HEK293 (cell line): ENCODE measurements at regions of chr10 and their contacts with region 1.

Region 1: DNA sequence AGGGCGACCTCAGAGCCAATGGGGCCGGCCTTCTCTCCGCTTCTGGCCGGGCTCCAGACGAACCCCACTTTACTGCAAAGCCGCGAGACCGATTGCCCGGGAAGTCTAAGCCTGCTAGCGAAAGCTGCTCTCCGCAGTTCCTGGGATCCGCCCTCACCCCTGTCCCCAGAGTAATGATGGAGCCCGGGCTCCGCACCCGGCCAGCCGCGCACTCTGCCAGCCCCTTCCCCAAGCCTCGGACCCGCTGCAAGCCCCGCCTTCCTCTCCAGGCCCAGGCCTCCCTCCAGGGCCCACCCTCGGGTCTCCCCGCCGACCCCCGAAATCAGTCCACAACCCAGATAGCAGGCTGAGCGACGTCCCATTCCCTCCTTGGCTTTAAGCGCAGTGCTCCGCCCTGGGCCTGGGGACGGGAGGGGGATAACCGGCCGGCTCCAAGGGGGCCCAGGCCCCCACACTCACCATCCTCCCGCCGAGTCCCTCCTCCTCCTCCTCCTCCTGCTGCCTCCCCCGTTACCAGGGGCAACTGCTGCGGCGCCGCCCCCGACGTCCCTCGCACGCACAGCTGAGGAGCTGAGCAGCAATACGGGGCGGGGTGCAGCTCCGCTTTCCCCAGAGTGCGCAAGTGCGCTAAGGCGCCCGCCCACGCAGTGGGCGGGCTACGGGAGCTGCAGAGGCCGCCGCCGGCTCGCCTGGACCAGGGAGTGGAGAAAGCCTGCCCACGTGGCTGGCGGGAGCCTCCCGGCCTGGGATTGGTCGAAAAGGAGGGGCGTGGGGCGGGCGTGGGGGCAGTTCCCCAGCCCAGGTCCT is at the start of gene ARL3:
- H3K4me3 ChIP-seq: peak within 1 kb of the TSS; percentile 65
- H3K27ac ChIP-seq: peak within 1 kb of the TSS; percentile 83
- H3K4me1 ChIP-seq: peaks cover 24% of the 10 kb centered on the region
- CTCF ChIP-seq: peak; percentile 73; the same call in 1 of the 2 replicates

Region 2: GRCh38 chr10:102633292-102633691 is 80.7 kb before region 1 on chr10:
- CTCF ChIA-PET with region 1: no interaction called
- POLR2A ChIA-PET with region 1: no interaction called
- H3K4me3 ChIP-seq: no peak overlapping the region
- H3K27ac ChIP-seq: no peak overlapping the region
- H3K4me1 ChIP-seq: peaks cover under 1% of the 10 kb centered on the region; the same call in 1 of the 2 replicates
- CTCF ChIP-seq: no peak

Region 3: GRCh38 chr10:102669206-102670064 is 44.6 kb before region 1 on chr10:
- CTCF ChIA-PET with region 1: interaction called, 11 read pairs
- POLR2A ChIA-PET with region 1: interaction called, 5 read pairs
- H3K4me3 ChIP-seq: no peak overlapping the region
- H3K27ac ChIP-seq: no peak overlapping the region
- H3K4me1 ChIP-seq: peaks cover 3% of the 10 kb centered on the region; the same call in 1 of the 2 replicates
- CTCF ChIP-seq: peak; percentile 47

Region 4: DNA sequence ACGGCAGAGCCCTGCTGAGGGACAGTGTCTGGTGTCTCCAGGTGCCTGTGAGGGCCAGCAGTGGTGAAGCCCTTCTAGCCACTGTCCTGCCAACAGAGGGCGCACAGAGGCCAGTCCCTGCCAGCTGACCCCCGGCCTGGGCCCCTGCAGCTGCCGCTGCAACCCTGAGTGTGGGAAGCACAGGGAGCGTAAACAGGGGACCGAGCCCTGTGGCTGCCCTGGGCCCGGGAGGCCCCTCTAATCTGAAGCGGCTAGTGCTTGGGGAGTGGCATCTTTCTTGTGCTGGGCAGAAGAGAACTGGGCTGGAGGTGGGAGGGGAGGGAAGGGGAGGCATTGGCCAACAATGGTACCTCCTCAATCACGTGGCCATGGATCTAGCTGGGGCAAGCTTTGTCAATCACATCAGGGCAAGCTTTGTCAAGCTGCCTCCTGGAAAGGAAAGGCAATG is 35.2 kb before region 1 on chr10:
- CTCF ChIA-PET with region 1: interaction called, 57 read pairs
- POLR2A ChIA-PET with region 1: interaction called, 13 read pairs
- H3K4me3 ChIP-seq: no peak overlapping the region
- H3K27ac ChIP-seq: peak overlapping the region; percentile 2; the same call in 1 of the 2 replicates
- H3K4me1 ChIP-seq: peaks cover 15% of the 10 kb centered on the region
- CTCF ChIP-seq: peak; percentile 87

Region 5: GRCh38 chr10:102743588-102744373 is 29.8 kb after region 1 on chr10 and contains the start of gene WBP1L:
- CTCF ChIA-PET with region 1: no interaction called
- POLR2A ChIA-PET with region 1: interaction called, 11 read pairs
- H3K4me3 ChIP-seq: peak within 1 kb of the TSS; percentile 66
- H3K27ac ChIP-seq: peak within 1 kb of the TSS; percentile 59
- H3K4me1 ChIP-seq: no peaks in the 10 kb centered on the region
- CTCF ChIP-seq: 0 out of 2 replicates have a peak, but pooled peaks have one; percentile 32